ENCODE measurements at regions of chr15 and their contacts with region 1.

Region 1: GRCh38 chr15:70466895-70467529 is 296.3 kb downstream of the UACA start:
- DNase-seq: peak; percentile 65
- ATAC-seq: peak; percentile 87
- H3K4me3 Mint-ChIP-seq: no peak overlapping the region
- H3K27ac Mint-ChIP-seq: no peak overlapping the region
- H3K4me1 Mint-ChIP-seq: peaks cover 4% of the 10 kb centered on the region
- H3K27me3 Mint-ChIP-seq: peaks cover 87% of the 10 kb centered on the region

Region 2: GRCh38 chr15:69475769-69476358 is 991.1 kb before region 1 on chr15:
- CTCF ChIA-PET with region 1: interaction called, 44 read pairs
- DNase-seq: peak; percentile 77
- ATAC-seq: peak; percentile 83
- H3K4me3 Mint-ChIP-seq: no peak overlapping the region
- H3K27ac Mint-ChIP-seq: no peak overlapping the region
- H3K4me1 Mint-ChIP-seq: peaks cover 5% of the 10 kb centered on the region
- H3K27me3 Mint-ChIP-seq: peaks cover 56% of the 10 kb centered on the region

Region 3: GRCh38 chr15:69523010-69524001 is 943.7 kb before region 1 on chr15:
- CTCF ChIA-PET with region 1: interaction called, 10 read pairs
- DNase-seq: peak; percentile 78
- ATAC-seq: no peak
- H3K4me3 Mint-ChIP-seq: no peak overlapping the region
- H3K27ac Mint-ChIP-seq: no peak overlapping the region
- H3K4me1 Mint-ChIP-seq: no peaks in the 10 kb centered on the region
- H3K27me3 Mint-ChIP-seq: peaks cover 27% of the 10 kb centered on the region

Region 4: GRCh38 chr15:70234256-70234905 is 232.6 kb before region 1 on chr15:
- CTCF ChIA-PET with region 1: no interaction called
- DNase-seq: peak; percentile 50
- ATAC-seq: peak; percentile 33
- H3K4me3 Mint-ChIP-seq: no peak overlapping the region
- H3K27ac Mint-ChIP-seq: no peak overlapping the region
- H3K4me1 Mint-ChIP-seq: peaks cover 37% of the 10 kb centered on the region
- H3K27me3 Mint-ChIP-seq: peaks cover 15% of the 10 kb centered on the region

Region 5: DNA sequence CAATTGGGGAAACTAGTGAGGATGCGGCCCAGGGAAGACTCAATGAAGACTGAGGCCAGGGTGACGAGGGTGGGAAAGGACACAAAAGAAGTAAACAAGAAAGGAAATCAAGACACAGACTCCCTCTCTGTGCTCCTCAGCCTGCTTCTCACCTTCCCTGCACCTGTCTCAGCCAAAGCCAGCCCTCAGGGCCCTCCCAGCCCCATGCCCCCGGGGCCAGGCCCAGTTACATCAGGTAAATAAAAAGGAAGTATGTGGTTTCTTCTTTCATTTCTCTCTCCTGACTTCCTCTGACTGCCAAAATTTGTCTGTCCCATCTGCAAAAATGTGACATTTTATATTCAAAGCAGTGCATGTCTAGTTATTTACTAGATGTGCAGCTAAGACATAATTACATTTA is 31.6 kb before region 1 on chr15:
- CTCF ChIA-PET with region 1: no interaction called
- DNase-seq: no peak
- ATAC-seq: no peak
- H3K4me3 Mint-ChIP-seq: no peak overlapping the region
- H3K27ac Mint-ChIP-seq: no peak overlapping the region
- H3K4me1 Mint-ChIP-seq: peaks cover 24% of the 10 kb centered on the region
- H3K27me3 Mint-ChIP-seq: peaks cover 36% of the 10 kb centered on the region

Region 6: GRCh38 chr15:70451821-70452653 is 15.0 kb before region 1 on chr15:
- CTCF ChIA-PET with region 1: interaction called, 23 read pairs
- DNase-seq: no peak
- ATAC-seq: no peak
- H3K4me3 Mint-ChIP-seq: no peak overlapping the region
- H3K27ac Mint-ChIP-seq: no peak overlapping the region
- H3K4me1 Mint-ChIP-seq: peaks cover 25% of the 10 kb centered on the region
- H3K27me3 Mint-ChIP-seq: peaks cover 50% of the 10 kb centered on the region

Region 7: DNA sequence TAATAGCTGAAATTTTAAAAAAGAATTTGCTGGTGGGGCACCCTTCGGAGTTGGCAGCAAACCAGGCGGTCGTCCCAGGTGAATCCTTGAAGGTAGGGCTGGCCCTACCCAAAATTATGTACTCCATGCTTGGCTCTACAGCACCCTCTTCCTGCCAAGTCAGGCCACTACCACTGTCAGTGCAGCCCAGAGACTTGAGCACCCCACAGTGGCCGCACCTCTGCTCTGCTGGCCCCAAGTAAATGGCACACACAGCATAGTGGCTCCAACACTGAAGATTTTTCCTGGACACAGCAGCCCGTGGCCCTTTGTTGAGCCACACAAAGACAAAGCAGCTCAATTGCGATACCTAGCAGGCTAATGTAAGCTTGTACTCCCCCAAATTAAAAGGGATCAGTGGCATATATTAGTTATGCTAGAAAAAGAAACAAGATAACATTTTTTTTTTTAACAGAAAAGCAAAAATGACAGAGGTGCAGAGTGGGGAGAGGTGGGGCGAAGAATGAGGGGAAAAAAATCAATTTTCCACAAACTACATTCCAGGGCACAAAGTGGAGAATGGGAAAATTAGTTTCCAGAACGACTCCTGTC is 45.9 kb after region 1 on chr15:
- CTCF ChIA-PET with region 1: interaction called, 17 read pairs
- DNase-seq: peak; percentile 84
- ATAC-seq: peak; percentile 91
- H3K4me3 Mint-ChIP-seq: no peak overlapping the region
- H3K27ac Mint-ChIP-seq: no peak overlapping the region
- H3K4me1 Mint-ChIP-seq: peaks cover 30% of the 10 kb centered on the region
- H3K27me3 Mint-ChIP-seq: peaks cover 57% of the 10 kb centered on the region

Region 8: GRCh38 chr15:71066983-71067382 is 600.0 kb after region 1 on chr15:
- CTCF ChIA-PET with region 1: no interaction called
- DNase-seq: no peak
- ATAC-seq: no peak
- H3K4me3 Mint-ChIP-seq: no peak overlapping the region
- H3K27ac Mint-ChIP-seq: no peak overlapping the region
- H3K4me1 Mint-ChIP-seq: no peaks in the 10 kb centered on the region
- H3K27me3 Mint-ChIP-seq: no peaks in the 10 kb centered on the region